ENCODE measurements at regions of chr6 and their contacts with region 1.

Region 1: DNA sequence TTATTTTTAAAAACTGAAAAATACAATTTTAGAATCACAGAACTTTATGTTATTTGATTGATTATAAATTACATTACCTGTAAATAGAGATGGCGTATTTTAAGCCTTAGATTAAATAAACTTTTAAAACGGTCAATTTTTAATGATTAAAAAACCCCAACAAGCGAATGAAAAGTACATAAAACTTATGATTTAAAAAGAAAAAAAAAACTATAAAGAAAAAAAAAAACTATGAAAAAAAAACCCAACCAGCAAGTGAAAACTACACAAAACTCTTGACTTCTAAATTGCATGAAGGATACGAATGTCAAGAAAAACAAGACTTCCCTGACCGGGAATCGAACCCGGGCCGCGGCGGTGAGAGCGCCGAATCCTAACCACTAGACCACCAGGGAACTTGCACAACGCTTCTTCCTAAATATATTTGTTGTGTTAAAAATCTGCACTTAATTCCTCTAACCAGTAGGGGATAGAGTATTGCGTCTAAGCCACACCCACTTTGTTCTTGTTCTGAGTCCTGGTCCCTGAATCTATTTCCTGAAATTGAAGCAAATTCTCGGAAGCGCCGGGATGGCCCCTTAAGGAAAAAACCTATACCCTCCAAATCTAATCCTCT is 10.7 kb upstream of the NCOA7 start:
- DNase-seq: peak; percentile 90
- H3K4me3 Mint-ChIP-seq: no peak overlapping the region
- H3K27ac Mint-ChIP-seq: no peak overlapping the region
- H3K4me1 Mint-ChIP-seq: peaks cover 14% of the 10 kb centered on the region
- H3K27me3 Mint-ChIP-seq: no peaks in the 10 kb centered on the region

Region 2: GRCh38 chr6:125314019-125314581 is 465.9 kb before region 1 on chr6:
- CTCF ChIA-PET with region 1: interaction called, 12 read pairs
- POLR2A ChIA-PET with region 1: no interaction called
- intact Hi-C with region 1: no loop called
- DNase-seq: peak; percentile 58
- H3K4me3 Mint-ChIP-seq: no peak overlapping the region
- H3K27ac Mint-ChIP-seq: no peak overlapping the region
- H3K4me1 Mint-ChIP-seq: no peaks in the 10 kb centered on the region
- H3K27me3 Mint-ChIP-seq: peaks cover 11% of the 10 kb centered on the region

Region 3: DNA sequence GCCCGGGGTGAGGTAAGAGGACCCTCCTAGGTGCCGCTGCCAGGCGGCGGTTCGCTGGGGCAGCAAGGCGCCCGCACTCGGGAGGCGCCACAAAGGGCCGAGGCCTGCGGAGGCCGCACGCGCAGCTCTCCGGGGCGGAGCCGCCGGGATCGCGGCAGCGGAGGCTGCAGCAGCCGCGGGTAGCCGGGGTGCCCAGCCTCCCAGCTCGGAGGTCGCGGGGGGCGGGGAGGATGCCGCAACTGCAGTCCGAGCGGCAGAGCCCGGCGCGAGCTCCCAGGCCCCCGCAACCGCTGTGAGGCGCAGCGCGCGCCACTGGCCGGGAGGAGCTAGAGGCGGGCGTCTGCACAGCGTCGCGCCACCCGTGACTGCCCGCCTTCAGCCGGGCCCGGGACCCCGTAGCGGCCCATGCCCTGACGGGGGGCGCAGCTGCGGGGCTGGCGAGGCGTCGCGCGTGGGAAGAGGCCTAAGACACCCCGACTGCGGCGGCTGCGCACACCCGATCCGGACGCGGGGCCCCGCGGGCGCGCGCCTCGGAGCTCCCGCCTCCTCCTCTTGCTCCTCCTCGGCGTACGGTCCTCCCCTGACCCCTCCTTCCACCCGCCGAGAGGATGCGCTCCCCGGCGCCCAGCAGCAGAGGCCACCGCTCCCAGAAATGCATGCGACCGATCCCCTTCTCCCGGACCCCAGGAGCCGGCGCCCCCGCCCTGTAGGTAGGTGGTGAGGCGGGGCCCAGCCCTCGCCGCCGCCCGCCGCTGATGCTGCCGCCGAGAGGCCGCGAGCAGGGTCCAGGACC is 10.5 kb after region 1 on chr6 and contains the start of gene NCOA7:
- CTCF ChIA-PET with region 1: interaction called, 93 read pairs
- POLR2A ChIA-PET with region 1: interaction called, 101 read pairs
- intact Hi-C with region 1: loop called (anchors 1 kb)
- DNase-seq: peak; percentile 86
- H3K4me3 Mint-ChIP-seq: peak within 1 kb of the TSS; percentile 86
- H3K27ac Mint-ChIP-seq: peak within 1 kb of the TSS; percentile 96
- H3K4me1 Mint-ChIP-seq: peaks cover 54% of the 10 kb centered on the region
- H3K27me3 Mint-ChIP-seq: no peaks in the 10 kb centered on the region
- total RNA-seq, gene NCOA7: 42.3 to 43.4 TPM

Region 4: DNA sequence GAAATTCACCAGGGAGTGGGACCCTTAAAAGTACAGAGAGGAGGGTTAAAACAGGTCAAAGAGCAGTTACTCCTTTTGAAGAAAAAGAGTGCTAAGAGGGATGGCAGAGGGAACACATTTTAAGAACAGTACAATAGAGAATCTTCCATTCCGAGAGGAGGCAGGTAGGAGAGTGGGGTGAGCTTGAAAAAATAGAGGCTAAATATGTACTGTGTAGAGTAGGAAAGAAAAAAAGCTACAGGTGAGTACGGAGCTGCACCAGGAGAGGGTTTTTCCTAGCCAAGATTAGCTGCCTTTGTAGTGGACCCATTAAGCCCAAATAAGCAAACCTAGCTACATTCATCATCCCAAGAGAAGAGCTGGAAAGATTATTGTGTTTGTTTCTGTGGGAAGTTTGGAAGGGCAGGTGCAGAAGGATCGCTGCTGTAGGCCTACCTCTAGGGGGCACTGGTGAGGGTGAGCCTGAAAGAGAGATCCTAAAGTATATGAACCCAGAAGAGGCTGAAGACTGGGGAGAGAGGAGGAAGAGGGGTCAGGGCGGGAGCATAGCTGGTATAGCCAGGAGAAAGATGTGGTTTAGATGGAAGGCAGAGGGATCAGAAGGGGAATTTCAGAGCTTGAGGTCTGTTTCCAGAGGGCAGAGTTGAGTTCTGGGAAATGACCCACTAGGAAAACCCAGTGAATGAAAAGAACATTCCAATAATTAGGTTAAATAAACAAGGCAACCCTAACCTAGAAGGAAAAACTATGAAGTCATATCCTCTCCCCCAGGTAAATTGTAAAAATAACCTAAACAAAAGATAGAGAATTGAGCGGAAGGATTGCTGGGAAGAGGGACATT is 126.3 kb after region 1 on chr6:
- CTCF ChIA-PET with region 1: interaction called, 3 read pairs
- POLR2A ChIA-PET with region 1: interaction called, 4 read pairs
- intact Hi-C with region 1: loop called (anchors 2 kb)
- DNase-seq: peak; percentile 63
- H3K4me3 Mint-ChIP-seq: no peak overlapping the region
- H3K27ac Mint-ChIP-seq: peak overlapping the region; percentile 26
- H3K4me1 Mint-ChIP-seq: peaks cover 47% of the 10 kb centered on the region
- H3K27me3 Mint-ChIP-seq: no peaks in the 10 kb centered on the region

Region 5: GRCh38 chr6:125945378-125946141 is 165.5 kb after region 1 on chr6:
- CTCF ChIA-PET with region 1: no interaction called
- POLR2A ChIA-PET with region 1: no interaction called
- intact Hi-C with region 1: no loop called
- DNase-seq: no peak
- H3K4me3 Mint-ChIP-seq: no peak overlapping the region
- H3K27ac Mint-ChIP-seq: no peak overlapping the region
- H3K4me1 Mint-ChIP-seq: peaks cover 15% of the 10 kb centered on the region
- H3K27me3 Mint-ChIP-seq: peaks cover 4% of the 10 kb centered on the region

Region 6: GRCh38 chr6:125974214-125974866 is 194.3 kb after region 1 on chr6:
- CTCF ChIA-PET with region 1: interaction called, 11 read pairs
- POLR2A ChIA-PET with region 1: no interaction called
- intact Hi-C with region 1: loop called (anchors 1 kb)
- DNase-seq: no peak
- H3K4me3 Mint-ChIP-seq: no peak overlapping the region
- H3K27ac Mint-ChIP-seq: no peak overlapping the region
- H3K4me1 Mint-ChIP-seq: peaks cover 4% of the 10 kb centered on the region
- H3K27me3 Mint-ChIP-seq: no peaks in the 10 kb centered on the region

Region 7: GRCh38 chr6:127266178-127266891 is 1486.3 kb after region 1 on chr6 and contains the start of gene RNF146:
- CTCF ChIA-PET with region 1: no interaction called
- POLR2A ChIA-PET with region 1: no interaction called
- intact Hi-C with region 1: loop called (anchors 5 kb)
- DNase-seq: peak; percentile 77
- H3K4me3 Mint-ChIP-seq: peak within 1 kb of the TSS; percentile 93
- H3K27ac Mint-ChIP-seq: peak within 1 kb of the TSS; percentile 97
- H3K4me1 Mint-ChIP-seq: peaks cover 32% of the 10 kb centered on the region
- H3K27me3 Mint-ChIP-seq: peaks cover 1% of the 10 kb centered on the region
- total RNA-seq, gene RNF146: 15.4 to 20.3 TPM

Measured in activated CD4-positive, alpha-beta memory T cell treated with anti-CD3 and anti-CD28 coated beads for 36 hours (primary cell).